Activated B cell treated with CpG ODN at 0.5 μM for 24 hours (primary cell): ENCODE measurements at regions of chr11 and their contacts with region 1.

Region 1: DNA sequence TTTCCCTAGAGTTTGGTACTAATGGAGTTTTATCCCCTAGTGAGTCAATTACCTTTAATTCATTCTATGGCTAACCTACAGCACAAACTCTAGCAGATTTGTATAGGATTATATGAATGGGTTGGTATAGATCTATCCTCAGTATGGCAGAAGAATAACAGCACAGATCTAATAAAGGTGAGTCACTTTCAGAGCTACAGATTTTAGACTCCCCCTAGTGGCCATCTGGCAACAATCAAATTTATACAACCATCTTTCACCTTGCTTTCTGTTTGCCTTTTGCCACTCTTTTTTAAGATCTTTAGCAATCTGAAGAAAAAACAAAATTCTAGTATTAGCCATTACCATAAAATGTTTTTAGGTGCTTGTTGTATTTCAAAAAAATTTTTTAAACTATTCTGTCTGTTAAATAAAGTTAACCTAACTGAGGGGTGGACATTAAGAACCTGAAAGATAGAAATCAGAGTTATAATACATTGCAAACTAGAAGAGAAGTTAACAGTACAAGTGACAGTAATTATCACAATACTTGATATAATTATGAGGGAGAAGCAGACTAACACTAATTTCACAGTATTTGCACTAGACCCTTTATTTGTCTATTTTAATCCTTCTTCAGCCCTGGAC is 25.8 kb downstream of the DDIAS start:
- DNase-seq: no peak
- ATAC-seq: peak; percentile 76
- H3K4me3 Mint-ChIP-seq: peak overlapping the region; percentile 45
- H3K27ac Mint-ChIP-seq: peak overlapping the region; percentile 75
- H3K4me1 Mint-ChIP-seq: peaks cover 85% of the 10 kb centered on the region
- H3K27me3 Mint-ChIP-seq: no peaks in the 10 kb centered on the region
- CTCF ChIP-seq: no peak

Region 2: GRCh38 chr11:82900277-82901164 is 26.8 kb before region 1 on chr11 and contains the start of gene PRCP:
- CTCF ChIA-PET with region 1: interaction called, 4 read pairs
- POLR2A ChIA-PET with region 1: interaction called, 39 read pairs
- intact Hi-C with region 1: no loop called
- DNase-seq: peak; percentile 78
- ATAC-seq: peak; percentile 75
- H3K4me3 Mint-ChIP-seq: peak within 1 kb of the TSS; percentile 100
- H3K27ac Mint-ChIP-seq: peak within 1 kb of the TSS; percentile 99
- H3K4me1 Mint-ChIP-seq: peaks cover 57% of the 10 kb centered on the region
- H3K27me3 Mint-ChIP-seq: no peaks in the 10 kb centered on the region
- CTCF ChIP-seq: no peak
- total RNA-seq, gene PRCP: 29.8 and 34.8 TPM in 2 replicates

Region 3: DNA sequence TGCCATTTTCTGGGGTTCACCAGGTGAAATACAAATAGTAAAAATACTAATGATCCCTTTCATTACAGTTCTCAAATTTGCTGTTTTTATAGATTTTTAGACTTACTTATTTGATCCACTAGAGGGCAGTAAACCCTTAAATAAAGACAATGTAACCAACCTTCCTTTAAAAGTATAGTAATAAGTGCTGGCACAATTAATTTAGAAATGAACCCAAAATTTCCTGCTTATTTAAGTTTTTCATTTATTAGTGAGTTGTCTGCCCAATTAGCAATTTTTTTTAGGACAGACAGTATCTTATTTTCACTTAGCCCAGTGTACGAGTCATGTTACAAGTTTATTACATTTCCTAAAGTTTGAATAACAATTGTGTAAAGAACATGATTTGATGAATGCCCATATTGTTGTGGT is 21.1 kb before region 1 on chr11:
- CTCF ChIA-PET with region 1: interaction called, 34 read pairs
- POLR2A ChIA-PET with region 1: interaction called, 39 read pairs
- intact Hi-C with region 1: loop called (anchors 1 kb)
- DNase-seq: no peak
- ATAC-seq: no peak
- H3K4me3 Mint-ChIP-seq: no peak overlapping the region
- H3K27ac Mint-ChIP-seq: peak overlapping the region; percentile 38
- H3K4me1 Mint-ChIP-seq: peaks cover 44% of the 10 kb centered on the region
- H3K27me3 Mint-ChIP-seq: no peaks in the 10 kb centered on the region
- CTCF ChIP-seq: peak; percentile 35

Region 4: DNA sequence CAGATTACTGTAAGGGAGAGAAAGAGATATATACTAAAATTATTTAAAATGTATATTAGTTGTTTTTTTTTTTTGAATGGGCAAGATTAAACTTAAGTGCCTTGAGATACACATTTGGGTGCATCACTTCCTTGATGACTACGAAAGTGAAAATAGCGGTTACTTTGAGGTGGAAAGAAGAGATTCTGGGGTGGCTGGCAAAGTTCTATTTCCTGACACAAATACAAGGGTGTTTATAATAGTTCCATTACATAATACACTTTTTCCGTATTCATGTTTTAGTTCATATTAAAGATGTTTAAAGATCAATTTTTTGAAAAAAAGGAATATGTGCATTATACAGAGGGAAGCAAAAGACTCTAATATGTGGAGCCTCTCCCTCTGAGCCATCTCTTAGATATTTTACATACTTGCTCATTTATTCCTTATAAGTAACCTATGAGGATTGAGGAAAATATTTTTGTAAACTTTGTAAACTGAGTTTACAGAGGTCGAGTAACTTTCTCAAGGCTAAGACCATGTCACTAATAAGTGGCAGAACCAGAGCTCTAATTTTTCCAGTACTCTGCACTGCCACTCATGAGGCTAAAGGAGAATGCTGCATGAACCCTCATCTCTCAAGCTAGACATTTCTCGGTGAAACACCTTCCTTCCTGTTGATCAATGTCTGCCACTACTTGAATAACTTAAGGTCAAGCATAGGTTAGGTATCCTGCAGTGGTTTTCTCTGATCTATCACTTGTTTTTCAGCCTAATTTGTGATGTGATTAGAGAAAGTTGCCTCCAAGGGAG is 32.8 kb after region 1 on chr11:
- CTCF ChIA-PET with region 1: no interaction called
- POLR2A ChIA-PET with region 1: interaction called, 4 read pairs
- intact Hi-C with region 1: loop called (anchors 2 kb)
- DNase-seq: no peak
- ATAC-seq: peak; percentile 71
- H3K4me3 Mint-ChIP-seq: peak overlapping the region; percentile 46
- H3K27ac Mint-ChIP-seq: peak overlapping the region; percentile 87
- H3K4me1 Mint-ChIP-seq: peaks cover 66% of the 10 kb centered on the region
- H3K27me3 Mint-ChIP-seq: no peaks in the 10 kb centered on the region
- CTCF ChIP-seq: no peak

Region 5: GRCh38 chr11:82969811-82970210 is 42.4 kb after region 1 on chr11:
- CTCF ChIA-PET with region 1: interaction called, 3 read pairs
- POLR2A ChIA-PET with region 1: interaction called, 5 read pairs
- intact Hi-C with region 1: loop called (anchors 2 kb)
- DNase-seq: no peak
- ATAC-seq: peak; percentile 73
- H3K4me3 Mint-ChIP-seq: peak overlapping the region; percentile 41
- H3K27ac Mint-ChIP-seq: peak overlapping the region; percentile 69
- H3K4me1 Mint-ChIP-seq: peaks cover 54% of the 10 kb centered on the region
- H3K27me3 Mint-ChIP-seq: no peaks in the 10 kb centered on the region
- CTCF ChIP-seq: no peak

Region 6: GRCh38 chr11:82996966-82997606 is 69.7 kb after region 1 on chr11:
- CTCF ChIA-PET with region 1: interaction called, 7 read pairs
- POLR2A ChIA-PET with region 1: interaction called, 11 read pairs
- intact Hi-C with region 1: no loop called
- DNase-seq: no peak
- ATAC-seq: peak; percentile 88
- H3K4me3 Mint-ChIP-seq: peak overlapping the region; percentile 75
- H3K27ac Mint-ChIP-seq: peak overlapping the region; percentile 84
- H3K4me1 Mint-ChIP-seq: peaks cover 93% of the 10 kb centered on the region
- H3K27me3 Mint-ChIP-seq: no peaks in the 10 kb centered on the region
- CTCF ChIP-seq: no peak